ENCODE measurements at regions of chr1 and their contacts with region 1.

Region 1: DNA sequence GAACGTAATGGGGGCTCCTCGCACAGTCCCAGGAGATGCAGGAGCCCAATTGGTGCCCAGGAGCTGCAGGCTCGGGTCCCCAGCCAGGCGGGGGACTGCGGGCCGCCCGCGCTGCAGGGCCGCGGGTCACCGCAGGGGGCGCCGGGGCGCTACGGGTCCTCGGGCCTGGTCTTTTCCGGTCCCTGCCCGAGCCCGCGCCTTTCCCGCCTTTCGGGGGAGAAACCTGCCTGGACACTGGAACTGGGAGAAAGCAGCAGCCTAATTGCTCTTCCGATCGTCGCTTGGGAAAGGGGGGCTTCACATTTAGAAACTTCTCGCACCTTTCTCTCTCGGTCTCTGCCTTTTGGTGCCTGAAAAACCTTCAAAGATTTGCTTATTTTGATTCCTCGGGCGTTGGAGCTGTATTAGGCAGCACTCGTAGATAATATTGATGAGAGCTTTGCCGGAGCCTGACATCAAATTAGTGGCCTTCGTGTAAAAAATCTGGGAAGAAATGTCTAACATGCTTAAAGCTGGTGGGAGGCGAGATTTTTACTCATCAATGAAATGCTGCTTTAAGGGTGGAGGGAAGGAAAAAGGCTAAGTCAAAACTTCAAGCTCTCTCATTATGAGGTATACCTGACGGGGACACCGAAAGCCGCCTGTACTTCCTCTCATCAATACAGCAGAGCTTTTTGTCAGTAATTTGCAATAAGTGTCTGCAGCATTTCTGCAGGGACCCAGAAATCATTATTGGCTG is 12.6 kb upstream of the BARHL2 start:
- DNase-seq: peak in 1 of 9 donors; percentile 28
- ATAC-seq: no peak
- H3K4me3 ChIP-seq: peak overlapping the region; percentile 31
- H3K4me3 Mint-ChIP-seq: peak overlapping the region; percentile 2 to 90 (median 70)
- H3K27ac ChIP-seq: no peak overlapping the region
- H3K27ac Mint-ChIP-seq: peak overlapping the region in 1 of 9 donors; percentile 25
- H3K4me1 ChIP-seq: peaks cover 14 to 32% of the 10 kb centered on the region in 2 donors
- H3K4me1 Mint-ChIP-seq: peaks cover 28 to 64% (median 48%) of the 10 kb centered on the region in 7 donors
- H3K27me3 ChIP-seq: peaks cover 37 to 61% of the 10 kb centered on the region in 2 donors
- H3K27me3 Mint-ChIP-seq: peaks cover 83 to 96% (median 91%) of the 10 kb centered on the region in 5 donors

Region 2: GRCh38 chr1:90713741-90714509 is 15.7 kb before region 1 on chr1:
- CTCF ChIA-PET with region 1: no interaction called
- POLR2A ChIA-PET with region 1: no interaction called
- intact Hi-C with region 1: loop called in 1 of 2 experiments (anchors 1 kb)
- DNase-seq: no peak
- ATAC-seq: no peak
- H3K4me3 ChIP-seq: no peak overlapping the region
- H3K4me3 Mint-ChIP-seq: peak overlapping the region in 1 of 10 donors; percentile 49
- H3K27ac ChIP-seq: no peak overlapping the region
- H3K27ac Mint-ChIP-seq: no peak overlapping the region
- H3K4me1 ChIP-seq: peaks cover 0 to 4% of the 10 kb centered on the region in 2 donors
- H3K4me1 Mint-ChIP-seq: peaks cover 0 to 31% (median 20%) of the 10 kb centered on the region in 7 donors
- H3K27me3 ChIP-seq: peaks cover 23 to 65% of the 10 kb centered on the region in 2 donors
- H3K27me3 Mint-ChIP-seq: peaks cover 83 to 91% (median 86%) of the 10 kb centered on the region in 5 donors

Measured in naive thymus-derived CD4-positive, alpha-beta T cell (primary cell).